ENCODE measurements at regions of chrX and their contacts with region 1.

Region 1: DNA sequence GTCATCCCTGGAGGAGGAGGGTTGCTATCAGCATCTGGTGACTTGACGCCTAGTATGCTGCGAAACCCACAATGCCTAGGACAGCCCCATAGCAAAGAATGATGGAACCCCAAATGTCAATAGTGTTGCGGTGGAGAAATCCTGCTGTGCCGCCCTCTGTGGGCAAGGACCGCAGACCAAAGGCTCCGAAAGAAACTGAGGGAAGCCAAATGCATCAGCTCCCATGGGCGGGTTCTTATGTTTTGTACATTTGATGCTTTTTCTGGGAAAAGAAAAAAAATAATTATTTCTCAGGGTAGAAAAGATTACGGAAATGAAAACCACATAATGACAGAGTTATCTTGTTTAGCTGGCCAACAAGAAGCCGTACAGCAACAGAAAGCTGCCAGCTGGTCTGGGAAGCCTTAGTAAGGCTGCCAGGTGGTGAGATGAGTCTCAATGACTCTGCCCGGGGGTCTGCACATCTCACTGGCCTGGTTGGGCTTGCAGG is 95.0 kb upstream of the TBL1X start:
- DNase-seq: no peak
- H3K4me3 Mint-ChIP-seq: no peak overlapping the region
- H3K27ac Mint-ChIP-seq: peak overlapping the region; percentile 33
- H3K4me1 Mint-ChIP-seq: peaks cover 18% of the 10 kb centered on the region
- H3K27me3 Mint-ChIP-seq: peaks cover 4% of the 10 kb centered on the region

Region 2: GRCh38 chrX:9019151-9019550 is 350.7 kb before region 1 on chrX:
- intact Hi-C with region 1: no loop called
- DNase-seq: no peak
- H3K4me3 Mint-ChIP-seq: no peak overlapping the region
- H3K27ac Mint-ChIP-seq: no peak overlapping the region
- H3K4me1 Mint-ChIP-seq: no peaks in the 10 kb centered on the region
- H3K27me3 Mint-ChIP-seq: no peaks in the 10 kb centered on the region

Region 3: GRCh38 chrX:9352694-9353411 is 17.0 kb before region 1 on chrX:
- intact Hi-C with region 1: loop called (anchors 2 kb)
- DNase-seq: peak; percentile 56
- H3K4me3 Mint-ChIP-seq: peak overlapping the region; percentile 56
- H3K27ac Mint-ChIP-seq: peak overlapping the region; percentile 82
- H3K4me1 Mint-ChIP-seq: peaks cover 39% of the 10 kb centered on the region
- H3K27me3 Mint-ChIP-seq: no peaks in the 10 kb centered on the region